Activated CD4-positive, alpha-beta memory T cell treated with anti-CD3 and anti-CD28 coated beads, Interleukin-2, amount 10 ng/mL, durations not matched to agents 7 days and 5 days (primary cell): ENCODE measurements at regions of chr15 and their contacts with region 1.

Region 1: GRCh38 chr15:72231066-72231846 is at the start of gene PKM:
- DNase-seq: peak; percentile 96
- H3K4me3 Mint-ChIP-seq: peak within 1 kb of the TSS; percentile 100
- H3K27ac Mint-ChIP-seq: peak within 1 kb of the TSS; percentile 99
- H3K4me1 Mint-ChIP-seq: peaks cover 44% of the 10 kb centered on the region
- H3K27me3 Mint-ChIP-seq: no peaks in the 10 kb centered on the region
- total RNA-seq, gene PKM: 1,064 to 1,081 TPM

Region 2: DNA sequence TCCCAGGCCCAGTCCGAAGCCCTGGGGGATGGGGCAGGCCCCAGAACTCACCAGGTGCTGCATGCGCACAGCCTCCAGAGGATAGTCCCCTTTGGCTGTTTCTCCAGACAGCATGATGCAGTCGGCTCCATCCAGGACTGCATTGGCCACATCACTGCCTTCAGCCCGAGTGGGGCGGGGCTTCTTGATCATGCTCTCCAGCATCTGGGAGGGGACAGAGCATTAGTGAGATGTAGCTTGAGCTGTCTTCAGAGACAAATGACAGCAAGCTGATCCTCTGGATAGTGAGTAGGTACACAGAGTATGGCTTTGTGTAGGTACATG is 24.6 kb before region 1 on chr15:
- CTCF ChIA-PET with region 1: interaction called, 10 read pairs
- POLR2A ChIA-PET with region 1: interaction called, 61 read pairs
- DNase-seq: no peak
- H3K4me3 Mint-ChIP-seq: no peak overlapping the region
- H3K27ac Mint-ChIP-seq: no peak overlapping the region
- H3K4me1 Mint-ChIP-seq: peaks cover 14% of the 10 kb centered on the region
- H3K27me3 Mint-ChIP-seq: no peaks in the 10 kb centered on the region

Region 3: GRCh38 chr15:72272213-72273002 is 41.2 kb after region 1 on chr15 and contains the start of gene PARP6:
- CTCF ChIA-PET with region 1: interaction called, 28 read pairs
- POLR2A ChIA-PET with region 1: interaction called, 38 read pairs
- DNase-seq: peak; percentile 98
- H3K4me3 Mint-ChIP-seq: peak within 1 kb of the TSS; percentile 83
- H3K27ac Mint-ChIP-seq: peak within 1 kb of the TSS; percentile 83
- H3K4me1 Mint-ChIP-seq: peaks cover 38% of the 10 kb centered on the region
- H3K27me3 Mint-ChIP-seq: no peaks in the 10 kb centered on the region
- total RNA-seq, gene PARP6: 58.8 to 65.0 TPM

Region 4: DNA sequence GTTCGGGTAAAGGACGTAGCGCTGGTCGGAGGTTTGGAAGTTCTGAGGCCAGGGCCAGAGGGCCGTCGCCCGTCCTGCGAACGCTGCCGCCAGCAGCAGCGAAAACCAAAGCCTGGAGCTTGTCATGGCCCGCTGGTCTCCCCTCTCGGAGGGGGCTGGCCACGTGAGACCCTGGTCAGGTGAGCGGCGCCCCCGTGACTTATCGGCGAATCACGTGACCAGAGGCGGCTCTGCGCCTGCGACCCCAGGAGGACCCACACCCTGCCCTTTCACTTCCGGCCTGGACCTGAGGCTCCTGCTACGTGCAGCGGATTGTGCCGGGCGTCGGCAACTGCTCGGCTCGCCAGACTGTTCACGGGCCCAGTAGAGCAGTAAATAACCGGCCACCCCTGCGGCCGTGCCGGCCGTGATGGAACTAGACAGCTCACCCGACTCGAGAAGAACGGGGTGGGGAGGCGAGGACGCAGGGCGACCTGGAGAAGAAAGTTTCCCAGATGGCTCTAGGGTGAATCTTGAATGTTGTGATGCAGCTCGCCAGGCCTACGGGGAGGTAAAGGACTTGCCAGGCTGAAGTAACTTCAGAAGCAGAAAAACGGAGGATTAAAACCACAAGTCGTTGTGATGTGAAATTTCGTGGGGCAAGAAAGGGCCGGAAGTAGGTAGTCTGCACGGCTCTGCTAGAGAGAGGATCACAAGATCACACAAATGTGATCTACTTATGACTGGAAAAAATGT is 144.8 kb after region 1 on chr15 and contains the start of gene HEXA:
- CTCF ChIA-PET with region 1: interaction called, 5 read pairs
- POLR2A ChIA-PET with region 1: interaction called, 21 read pairs
- DNase-seq: peak; percentile 98
- H3K4me3 Mint-ChIP-seq: peak within 1 kb of the TSS; percentile 83
- H3K27ac Mint-ChIP-seq: peak within 1 kb of the TSS; percentile 92
- H3K4me1 Mint-ChIP-seq: peaks cover 41% of the 10 kb centered on the region
- H3K27me3 Mint-ChIP-seq: no peaks in the 10 kb centered on the region
- total RNA-seq, gene HEXA: 110 to 111 TPM

Region 5: GRCh38 chr15:72562878-72563277 is 331.6 kb after region 1 on chr15:
- CTCF ChIA-PET with region 1: no interaction called
- POLR2A ChIA-PET with region 1: no interaction called
- DNase-seq: no peak
- H3K4me3 Mint-ChIP-seq: no peak overlapping the region
- H3K27ac Mint-ChIP-seq: no peak overlapping the region
- H3K4me1 Mint-ChIP-seq: peaks cover 10% of the 10 kb centered on the region
- H3K27me3 Mint-ChIP-seq: no peaks in the 10 kb centered on the region